IMR-90 (cell line): ENCODE measurements at regions of chr2 and their contacts with region 1.

Region 1: DNA sequence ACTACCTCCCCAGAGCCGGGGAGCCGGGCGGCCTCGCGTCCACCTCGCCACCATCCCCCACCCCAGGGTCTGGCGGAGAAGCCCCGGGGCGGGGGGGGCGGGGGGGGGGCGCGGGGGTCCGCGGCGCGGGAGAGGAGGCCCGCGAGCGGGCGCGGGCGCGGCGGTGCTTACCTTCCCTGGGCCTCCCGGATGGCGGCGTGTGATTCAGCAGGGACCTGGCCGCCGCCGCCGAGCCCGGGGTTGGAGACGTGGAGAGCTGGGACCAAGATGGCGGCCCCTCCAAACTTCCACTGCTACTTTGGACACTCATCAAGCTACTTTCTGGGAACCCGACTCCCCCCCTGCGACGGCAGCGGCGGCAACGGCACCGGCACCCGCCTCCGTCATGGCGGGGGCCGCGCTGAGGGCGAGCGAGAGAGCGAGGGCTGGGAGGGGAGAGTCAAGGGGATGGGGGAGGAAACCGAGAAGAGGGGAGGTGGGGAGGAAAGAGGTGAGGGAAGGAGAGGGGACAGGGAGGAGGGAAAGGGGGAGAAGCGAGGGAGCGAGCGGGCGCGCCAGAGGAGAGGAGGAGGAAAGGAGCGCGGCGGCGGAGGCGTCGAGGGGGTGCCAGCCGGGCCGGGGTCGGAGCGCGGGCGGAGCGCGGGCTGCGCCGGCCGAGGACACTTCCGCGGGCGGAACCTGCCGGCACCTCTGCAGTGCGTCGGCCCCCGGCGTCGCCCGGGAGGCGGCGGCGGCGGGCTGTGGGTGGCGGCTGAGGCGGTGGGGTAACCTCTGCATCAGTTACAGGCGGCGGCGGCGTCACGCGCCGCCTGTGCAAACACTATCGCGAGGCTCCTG is at the start of gene TLK1:
- DNase-seq: peak; percentile 62
- ATAC-seq: peak; percentile 71
- H3K4me3 ChIP-seq: peak within 1 kb of the TSS; percentile 88
- H3K27ac ChIP-seq: peak within 1 kb of the TSS; percentile 99
- H3K4me1 ChIP-seq: no peaks in the 10 kb centered on the region
- H3K27me3 ChIP-seq: no peaks in the 10 kb centered on the region; the same call in 1 of the 2 replicates
- CTCF ChIP-seq: peak; percentile 24; the same call in 1 of the 2 replicates
- POLR2A ChIP-seq: peak; percentile 65; the same call in 1 of the 2 replicates
- RAD21 ChIP-seq: no peak
- total RNA-seq, gene TLK1: 12.5 TPM in 2 replicates

Region 2: DNA sequence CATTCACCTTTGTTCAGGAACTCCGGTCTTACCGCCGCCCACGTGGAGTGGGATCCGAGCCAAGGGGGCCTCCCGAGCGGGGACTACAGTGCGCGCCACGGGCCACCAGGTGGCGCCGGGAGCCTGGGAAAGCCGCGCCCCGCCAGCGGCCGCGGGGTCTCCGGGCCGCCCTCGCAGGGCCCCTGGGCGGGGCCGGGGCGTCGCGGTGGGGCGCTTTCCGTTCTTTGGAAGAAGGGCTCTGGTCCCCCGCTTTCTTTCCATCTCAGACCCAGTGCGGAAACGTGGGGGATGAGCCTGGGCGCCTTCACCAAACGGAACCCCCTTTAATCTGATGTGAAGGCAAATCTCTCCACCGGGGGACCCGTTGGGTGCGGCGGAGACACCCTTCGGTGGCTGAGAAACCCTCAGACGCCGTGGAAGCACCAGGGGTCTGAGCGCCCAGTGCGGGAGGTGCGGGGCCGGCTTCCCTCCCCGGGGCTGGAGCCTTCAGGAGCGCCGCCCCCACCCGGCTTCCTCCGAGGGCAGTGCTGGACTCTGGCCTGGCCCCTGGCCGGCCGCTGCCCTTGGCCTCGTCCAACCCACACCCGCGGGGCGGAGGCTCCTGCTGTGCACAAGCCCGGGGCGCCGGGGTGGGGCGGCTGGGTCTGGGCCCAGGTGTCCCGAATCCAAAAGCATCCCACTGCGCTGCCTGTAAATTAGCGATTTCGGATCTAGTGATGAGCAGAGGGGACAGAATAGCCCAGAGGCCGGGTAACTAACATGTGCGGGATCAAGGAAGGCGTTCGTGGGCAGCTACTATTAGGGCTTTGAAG is 186.6 kb before region 1 on chr2:
- CTCF ChIA-PET with region 1: no interaction called
- POLR2A ChIA-PET with region 1: no interaction called
- dilution Hi-C with region 1: no loop called
- in situ Hi-C with region 1: loop called (anchors 10 kb)
- intact Hi-C with region 1: loop called (anchors 1 kb)
- DNase-seq: peak; percentile 66
- ATAC-seq: peak; percentile 96
- H3K4me3 ChIP-seq: peak overlapping the region; percentile 86
- H3K27ac ChIP-seq: peak overlapping the region; percentile 84
- H3K4me1 ChIP-seq: peaks cover 4% of the 10 kb centered on the region
- H3K27me3 ChIP-seq: no peaks in the 10 kb centered on the region; the same call in 1 of the 2 replicates
- CTCF ChIP-seq: peak; percentile 97
- POLR2A ChIP-seq: peak; percentile 45; the same call in 1 of the 2 replicates
- RAD21 ChIP-seq: peak; percentile 95

Region 3: GRCh38 chr2:171056307-171056706 is 104.0 kb before region 1 on chr2:
- CTCF ChIA-PET with region 1: no interaction called
- POLR2A ChIA-PET with region 1: no interaction called
- dilution Hi-C with region 1: no loop called
- in situ Hi-C with region 1: no loop called
- intact Hi-C with region 1: loop called (anchors 5 kb)
- DNase-seq: peak; percentile 66
- ATAC-seq: peak; percentile 85
- H3K4me3 ChIP-seq: no peak overlapping the region
- H3K27ac ChIP-seq: no peak overlapping the region
- H3K4me1 ChIP-seq: no peaks in the 10 kb centered on the region
- H3K27me3 ChIP-seq: no peaks in the 10 kb centered on the region
- CTCF ChIP-seq: no peak
- POLR2A ChIP-seq: no peak
- RAD21 ChIP-seq: no peak

Region 4: GRCh38 chr2:171319164-171319810 is 158.9 kb after region 1 on chr2:
- CTCF ChIA-PET with region 1: interaction called, 3 read pairs
- POLR2A ChIA-PET with region 1: interaction called, 21 read pairs
- dilution Hi-C with region 1: no loop called
- in situ Hi-C with region 1: no loop called
- intact Hi-C with region 1: no loop called
- DNase-seq: peak; percentile 68
- ATAC-seq: peak; percentile 28
- H3K4me3 ChIP-seq: no peak overlapping the region
- H3K27ac ChIP-seq: no peak overlapping the region
- H3K4me1 ChIP-seq: peaks cover 8% of the 10 kb centered on the region
- H3K27me3 ChIP-seq: no peaks in the 10 kb centered on the region
- CTCF ChIP-seq: no peak
- POLR2A ChIP-seq: no peak
- RAD21 ChIP-seq: no peak

Region 5: GRCh38 chr2:171433763-171434670 is 273.7 kb after region 1 on chr2 and contains the starts of genes DCAF17 and METTL8:
- CTCF ChIA-PET with region 1: no interaction called
- POLR2A ChIA-PET with region 1: interaction called, 5 read pairs
- dilution Hi-C with region 1: no loop called
- in situ Hi-C with region 1: no loop called
- intact Hi-C with region 1: loop called (anchors 1 kb)
- DNase-seq: peak; percentile 94
- ATAC-seq: peak; percentile 98
- H3K4me3 ChIP-seq: peak within 1 kb of the TSS; percentile 93
- H3K27ac ChIP-seq: peak within 1 kb of the TSS; percentile 81
- H3K4me1 ChIP-seq: peaks cover 9% of the 10 kb centered on the region
- H3K27me3 ChIP-seq: no peaks in the 10 kb centered on the region
- CTCF ChIP-seq: 0 out of 2 replicates have a peak, but pooled peaks have one; percentile 5
- POLR2A ChIP-seq: peak; percentile 55; the same call in 1 of the 2 replicates
- RAD21 ChIP-seq: no peak
- total RNA-seq, gene DCAF17: 13.1 and 22.8 TPM in 2 replicates
- total RNA-seq, gene METTL8: 10.6 and 20.0 TPM in 2 replicates